Psoas muscle (tissue), 8 donors: ENCODE measurements at regions of chr4 and their contacts with region 1.

Region 1: DNA sequence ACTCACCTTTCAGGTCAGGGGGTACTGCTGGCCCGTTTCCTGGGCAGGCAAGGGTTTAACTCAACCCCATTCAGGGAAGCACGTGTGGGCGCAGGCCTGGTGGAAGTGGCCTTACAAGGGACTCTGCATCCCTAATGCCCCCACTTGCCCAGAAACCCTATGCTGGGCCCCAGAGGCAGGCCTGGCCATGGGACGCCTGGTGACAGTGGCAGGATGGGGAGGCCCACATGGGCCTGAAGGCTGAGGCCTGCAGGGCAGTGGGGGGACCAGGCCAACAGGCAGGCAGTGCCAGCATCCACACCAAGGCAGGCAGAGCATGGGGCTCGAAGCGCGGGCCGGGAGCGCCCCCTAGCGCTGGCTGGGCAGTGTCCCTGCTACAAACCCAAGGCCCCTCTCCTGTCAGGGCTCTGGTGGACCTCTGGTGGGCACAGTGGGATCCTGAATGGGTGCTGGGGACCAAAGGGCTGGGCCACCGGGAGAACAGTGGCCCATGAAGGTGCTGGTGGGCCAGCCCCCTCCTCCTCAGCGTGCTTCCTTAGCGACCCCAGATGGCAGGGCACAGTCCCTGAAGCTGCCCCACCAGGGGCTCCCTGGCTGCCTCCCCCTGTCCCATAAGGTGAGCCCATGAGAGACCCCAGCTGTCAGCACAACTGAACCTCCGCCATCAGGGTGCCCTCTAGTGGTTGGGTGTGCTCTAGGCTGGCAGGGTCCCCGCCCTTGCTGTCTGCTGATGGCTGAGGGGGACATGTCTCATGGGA is 16.8 kb downstream of the FGFR3 start:
- DNase-seq: peak; percentile 59 to 76
- ATAC-seq: peak; percentile 62 to 79 (median 70)
- H3K4me3 ChIP-seq: no peak overlapping the region
- H3K27ac ChIP-seq: no peak overlapping the region
- H3K4me1 ChIP-seq: no peaks in the 10 kb centered on the region
- H3K27me3 ChIP-seq: no peaks in the 10 kb centered on the region
- CTCF ChIP-seq: peak; percentile 64

Region 2: GRCh38 chr4:1746265-1746691 is 63.7 kb before region 1 on chr4:
- intact Hi-C with region 1: loop called (anchors 2 to 5 kb)
- DNase-seq: peak; percentile 75 to 85
- ATAC-seq: peak; percentile 81 to 91 (median 82)
- H3K4me3 ChIP-seq: no peak overlapping the region
- H3K27ac ChIP-seq: no peak overlapping the region
- H3K4me1 ChIP-seq: no peaks in the 10 kb centered on the region
- H3K27me3 ChIP-seq: peaks cover 0 to 8% (median 0%) of the 10 kb centered on the region in 3 donors
- CTCF ChIP-seq: peak; percentile 78

Region 3: DNA sequence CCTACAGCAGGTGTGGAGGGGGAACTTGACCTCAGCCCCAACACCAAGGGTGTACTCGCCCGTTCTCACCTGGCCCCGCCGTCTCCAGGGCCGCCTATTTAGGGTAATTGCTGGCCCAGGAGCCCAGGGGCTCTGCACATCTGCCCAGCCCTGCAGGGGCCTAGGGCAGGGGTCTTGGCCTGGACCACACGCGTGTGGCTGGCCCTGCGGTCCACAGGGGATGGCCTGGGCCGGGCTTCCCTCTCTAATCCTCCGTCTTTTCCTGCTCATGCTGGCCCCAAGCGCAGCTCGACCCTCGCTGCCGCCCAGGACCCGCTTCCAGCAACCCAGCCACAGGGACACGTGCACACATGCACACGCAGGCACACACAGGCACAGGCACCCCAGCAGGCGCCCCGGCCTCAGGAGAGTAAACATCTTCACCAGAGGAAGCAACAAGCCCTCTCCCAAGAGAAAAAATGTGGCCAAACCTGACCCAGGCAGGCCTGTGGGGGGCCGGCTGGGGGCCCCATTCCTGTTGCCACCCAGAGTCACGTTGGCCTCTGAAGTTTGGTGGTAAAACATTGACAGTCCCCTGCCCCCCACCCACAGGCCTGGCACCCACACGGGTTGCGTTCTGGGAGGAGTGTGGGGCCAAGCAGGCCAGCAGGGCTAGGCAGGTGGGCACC is 41.4 kb before region 1 on chr4:
- intact Hi-C with region 1: loop called in 1 of 2 experiments (anchors 1 kb)
- DNase-seq: no peak
- ATAC-seq: no peak
- H3K4me3 ChIP-seq: peak overlapping the region; percentile 53
- H3K27ac ChIP-seq: no peak overlapping the region
- H3K4me1 ChIP-seq: no peaks in the 10 kb centered on the region
- H3K27me3 ChIP-seq: peaks cover 0 to 17% (median 11%) of the 10 kb centered on the region in 3 donors
- CTCF ChIP-seq: no peak

Region 4: DNA sequence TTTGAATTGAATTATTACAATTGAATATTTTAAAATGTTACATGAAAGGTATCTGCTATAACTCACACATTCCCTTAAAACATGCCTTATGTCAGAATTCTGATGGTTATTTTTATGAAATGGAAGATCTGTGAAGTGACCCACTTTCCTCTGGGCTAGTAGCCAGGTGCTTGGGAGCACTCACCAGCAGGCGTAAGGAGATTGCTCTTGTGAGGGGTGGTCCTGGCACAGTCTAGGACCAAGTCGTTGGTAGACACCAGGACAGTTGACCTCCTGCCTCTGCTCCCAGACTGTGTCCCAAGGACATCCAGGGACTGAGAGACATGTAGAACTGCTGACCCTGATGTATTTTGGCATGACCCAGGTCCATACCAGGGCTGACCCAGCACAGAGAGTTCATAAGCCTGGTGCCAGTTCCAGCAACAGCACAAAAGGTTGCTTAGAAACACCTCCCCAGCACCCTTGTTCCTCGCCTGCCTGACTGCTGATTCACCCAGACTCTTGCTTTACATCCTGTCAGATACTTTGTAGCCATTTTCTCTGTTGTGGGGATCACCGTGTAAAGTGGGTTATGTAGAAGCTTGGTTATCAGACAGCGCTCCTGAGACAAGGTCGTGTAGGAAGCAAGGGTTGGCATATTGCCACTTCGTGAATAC is 150.4 kb after region 1 on chr4:
- intact Hi-C with region 1: no loop called
- DNase-seq: no peak
- ATAC-seq: peak in 1 of 4 donors; percentile 30
- H3K4me3 ChIP-seq: no peak overlapping the region
- H3K27ac ChIP-seq: no peak overlapping the region
- H3K4me1 ChIP-seq: no peaks in the 10 kb centered on the region
- H3K27me3 ChIP-seq: no peaks in the 10 kb centered on the region
- CTCF ChIP-seq: no peak